MCF 10A (cell line): ENCODE measurements at regions of chr12 and their contacts with region 1.

Region 1: GRCh38 chr12:118307069-118307954 is 65.4 kb downstream of the TAOK3 start:
- DNase-seq: peak; percentile 90
- H3K4me3 Mint-ChIP-seq: peak overlapping the region; percentile 63
- H3K27ac Mint-ChIP-seq: peak overlapping the region; percentile 80
- H3K4me1 Mint-ChIP-seq: peaks cover 22% of the 10 kb centered on the region
- H3K27me3 Mint-ChIP-seq: no peaks in the 10 kb centered on the region
- CTCF ChIP-seq: no peak

Region 2: DNA sequence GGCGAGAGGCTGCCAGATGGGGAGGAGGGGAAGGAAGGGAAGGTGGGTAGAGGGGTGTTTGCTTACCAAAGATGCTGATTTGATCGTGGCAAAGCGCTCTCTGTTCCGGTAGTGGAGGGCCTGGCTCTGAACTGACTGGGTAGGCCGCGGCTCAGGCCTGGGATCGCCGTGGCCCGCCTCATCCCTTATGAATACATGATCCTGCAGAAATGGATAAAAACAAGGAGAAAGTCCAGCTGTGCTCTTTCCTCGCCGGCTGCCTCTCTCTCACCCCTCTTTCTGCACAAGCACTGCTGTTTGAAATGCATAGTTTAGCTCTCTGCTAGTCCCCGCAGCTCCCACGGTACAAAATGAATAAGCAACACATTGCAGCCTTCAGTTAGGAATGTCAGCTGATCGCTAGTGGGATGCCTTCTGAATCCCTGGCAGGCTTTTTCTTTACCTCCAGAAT is 117.5 kb before region 1 on chr12:
- CTCF ChIA-PET with region 1: no interaction called
- POLR2A ChIA-PET with region 1: interaction called, 5 read pairs
- intact Hi-C with region 1: loop called (anchors 5 kb)
- DNase-seq: no peak
- H3K4me3 Mint-ChIP-seq: no peak overlapping the region
- H3K27ac Mint-ChIP-seq: peak overlapping the region; percentile 63
- H3K4me1 Mint-ChIP-seq: peaks cover 24% of the 10 kb centered on the region
- H3K27me3 Mint-ChIP-seq: no peaks in the 10 kb centered on the region
- CTCF ChIP-seq: no peak

Region 3: GRCh38 chr12:118259079-118259478 is 48.2 kb before region 1 on chr12:
- CTCF ChIA-PET with region 1: no interaction called
- POLR2A ChIA-PET with region 1: no interaction called
- intact Hi-C with region 1: no loop called
- DNase-seq: peak; percentile 34
- H3K4me3 Mint-ChIP-seq: no peak overlapping the region
- H3K27ac Mint-ChIP-seq: no peak overlapping the region
- H3K4me1 Mint-ChIP-seq: no peaks in the 10 kb centered on the region
- H3K27me3 Mint-ChIP-seq: no peaks in the 10 kb centered on the region
- CTCF ChIP-seq: no peak